ENCODE measurements at regions of chr2 and their contacts with region 1.

Region 1: DNA sequence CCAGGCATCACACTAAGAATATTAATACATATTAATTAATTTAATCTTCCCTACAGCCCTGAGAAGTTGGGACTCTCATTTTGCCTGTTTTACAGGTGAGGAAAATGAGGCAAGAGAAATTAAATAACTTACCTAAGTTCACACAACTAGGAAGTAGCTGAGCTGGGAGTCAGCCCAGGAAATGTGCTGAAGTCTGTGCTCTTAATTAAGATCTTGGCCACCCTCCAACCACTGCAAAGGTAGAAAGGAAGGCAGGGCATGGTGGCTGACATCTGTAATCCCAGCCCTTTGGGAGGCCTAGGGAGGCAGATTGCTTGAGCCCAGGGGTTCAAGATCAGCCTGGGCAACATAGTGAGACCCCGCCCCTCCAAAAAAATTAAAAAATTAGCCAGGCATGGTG is 12.9 kb upstream of the MGAT4A start:
- DNase-seq: no peak
- H3K4me3 ChIP-seq: no peak overlapping the region
- H3K27ac ChIP-seq: no peak overlapping the region
- H3K4me1 ChIP-seq: peaks cover 12% of the 10 kb centered on the region
- H3K27me3 ChIP-seq: no peaks in the 10 kb centered on the region
- CTCF ChIP-seq: no peak

Region 2: GRCh38 chr2:98685930-98686887 is 57.6 kb before region 1 on chr2:
- CTCF ChIA-PET with region 1: no interaction called
- dilution Hi-C with region 1: loop called (anchors 5 kb)
- in situ Hi-C with region 1: no loop called
- intact Hi-C with region 1: no loop called
- DNase-seq: no peak
- H3K4me3 ChIP-seq: no peak overlapping the region
- H3K27ac ChIP-seq: no peak overlapping the region
- H3K4me1 ChIP-seq: no peaks in the 10 kb centered on the region
- H3K27me3 ChIP-seq: no peaks in the 10 kb centered on the region
- CTCF ChIP-seq: no peak

Region 3: GRCh38 chr2:98775146-98775986 is 31.5 kb after region 1 on chr2:
- CTCF ChIA-PET with region 1: no interaction called
- dilution Hi-C with region 1: loop called (anchors 5 kb)
- in situ Hi-C with region 1: no loop called
- intact Hi-C with region 1: no loop called
- DNase-seq: no peak
- H3K4me3 ChIP-seq: no peak overlapping the region
- H3K27ac ChIP-seq: no peak overlapping the region
- H3K4me1 ChIP-seq: peaks cover 12% of the 10 kb centered on the region
- H3K27me3 ChIP-seq: no peaks in the 10 kb centered on the region
- CTCF ChIP-seq: no peak

Region 4: GRCh38 chr2:98793897-98794830 is 50.3 kb after region 1 on chr2:
- CTCF ChIA-PET with region 1: no interaction called
- dilution Hi-C with region 1: no loop called
- in situ Hi-C with region 1: no loop called
- intact Hi-C with region 1: loop called (anchors 5 kb)
- DNase-seq: no peak
- H3K4me3 ChIP-seq: no peak overlapping the region
- H3K27ac ChIP-seq: peak overlapping the region; percentile 31
- H3K4me1 ChIP-seq: peaks cover 28% of the 10 kb centered on the region
- H3K27me3 ChIP-seq: no peaks in the 10 kb centered on the region
- CTCF ChIP-seq: no peak

Region 5: GRCh38 chr2:98819231-98819766 is 75.5 kb after region 1 on chr2:
- CTCF ChIA-PET with region 1: no interaction called
- dilution Hi-C with region 1: loop called (anchors 5 kb)
- in situ Hi-C with region 1: no loop called
- intact Hi-C with region 1: no loop called
- DNase-seq: no peak
- H3K4me3 ChIP-seq: no peak overlapping the region
- H3K27ac ChIP-seq: no peak overlapping the region
- H3K4me1 ChIP-seq: peaks cover 20% of the 10 kb centered on the region
- H3K27me3 ChIP-seq: no peaks in the 10 kb centered on the region
- CTCF ChIP-seq: no peak

Measured in mammary epithelial cell (primary cell).